Endothelial cell of umbilical vein (primary cell): ENCODE measurements at regions of chr14 and their contacts with region 1.

Region 1: DNA sequence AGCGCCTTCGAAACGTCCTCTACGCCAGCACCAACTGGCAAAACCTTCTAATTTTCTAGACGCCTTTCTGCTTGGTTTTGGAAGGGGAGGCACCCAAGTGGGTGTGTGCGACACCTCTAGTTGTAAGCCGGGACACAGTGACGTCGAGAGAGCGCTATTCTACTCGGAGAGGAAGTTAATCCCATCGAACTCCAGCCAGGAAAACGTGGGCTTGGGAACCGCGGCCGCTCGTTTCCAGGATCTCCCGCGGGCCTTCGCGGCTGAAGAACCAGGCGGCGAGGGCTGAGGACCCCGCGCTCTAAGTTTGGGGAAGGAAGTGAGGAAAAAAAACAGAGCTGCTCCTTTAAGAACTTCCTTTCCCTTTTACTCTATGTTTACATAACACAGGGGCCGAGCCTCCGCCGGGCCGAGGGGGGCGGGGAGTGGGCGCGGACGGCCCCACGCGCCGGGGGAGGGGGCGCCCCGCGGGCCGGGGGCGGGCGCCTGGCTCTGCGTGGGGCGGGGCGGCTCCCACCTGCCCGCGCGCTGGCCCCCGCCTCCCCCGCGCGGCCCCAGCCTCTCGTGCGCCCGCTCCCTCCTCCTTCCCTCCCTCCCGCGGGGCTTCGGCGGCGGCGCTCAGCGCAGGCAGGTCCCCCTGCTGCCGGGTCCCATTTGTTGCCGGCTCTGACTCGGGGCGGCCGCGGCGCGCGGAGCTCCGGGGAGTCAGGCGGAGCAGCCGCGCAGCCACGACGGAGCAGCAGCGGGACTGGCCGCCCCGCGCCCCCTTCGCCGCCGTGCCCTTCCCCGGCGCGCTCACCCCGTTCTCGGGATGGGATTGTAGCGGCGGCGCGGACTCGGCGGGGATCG is at the start of gene PELI2:
- DNase-seq: peak; percentile 64
- H3K4me3 ChIP-seq: peak within 1 kb of the TSS; percentile 77 to 92 (median 90)
- H3K27ac ChIP-seq: peak within 1 kb of the TSS; percentile 48
- H3K4me1 ChIP-seq: peaks cover 19% of the 10 kb centered on the region
- H3K27me3 ChIP-seq: peaks cover 0 to 3% of the 10 kb centered on the region in 2 experiments
- CTCF ChIP-seq: peak in 1 of 2 donors; percentile 27
- POLR2A ChIP-seq: peak; percentile 46
- total RNA-seq, gene PELI2: 13.0 TPM in 2 replicates

Region 2: DNA sequence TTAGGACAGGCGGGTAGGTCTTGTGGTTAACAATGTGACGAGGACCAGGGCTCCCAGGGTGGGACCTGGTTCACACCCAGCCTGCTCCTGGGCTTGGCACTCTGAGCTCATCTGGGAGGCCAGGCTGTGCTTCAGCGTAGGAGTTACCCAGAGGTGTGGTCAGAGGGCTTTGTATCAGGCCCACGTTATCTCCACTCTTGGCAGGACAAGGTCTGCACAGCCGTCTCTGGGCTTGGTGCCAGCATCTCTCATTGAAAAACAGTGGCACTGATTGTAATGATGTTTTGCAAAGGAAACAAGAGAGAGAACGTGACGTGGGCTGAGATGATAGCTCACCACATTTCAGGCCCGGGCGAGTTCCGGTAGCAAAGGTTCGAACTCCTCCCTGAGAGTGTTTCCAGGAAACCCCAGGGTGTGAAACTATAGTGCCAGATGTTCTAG is 310.9 kb before region 1 on chr14:
- CTCF ChIA-PET with region 1: no interaction called
- POLR2A ChIA-PET with region 1: no interaction called
- dilution Hi-C with region 1: no loop called
- intact Hi-C with region 1: loop called (anchors 5 kb)
- DNase-seq: peak; percentile 98
- H3K4me3 ChIP-seq: no peak overlapping the region
- H3K27ac ChIP-seq: peak overlapping the region; percentile 82
- H3K4me1 ChIP-seq: peaks cover 33% of the 10 kb centered on the region
- H3K27me3 ChIP-seq: no peaks in the 10 kb centered on the region
- CTCF ChIP-seq: no peak
- POLR2A ChIP-seq: no peak

Region 3: DNA sequence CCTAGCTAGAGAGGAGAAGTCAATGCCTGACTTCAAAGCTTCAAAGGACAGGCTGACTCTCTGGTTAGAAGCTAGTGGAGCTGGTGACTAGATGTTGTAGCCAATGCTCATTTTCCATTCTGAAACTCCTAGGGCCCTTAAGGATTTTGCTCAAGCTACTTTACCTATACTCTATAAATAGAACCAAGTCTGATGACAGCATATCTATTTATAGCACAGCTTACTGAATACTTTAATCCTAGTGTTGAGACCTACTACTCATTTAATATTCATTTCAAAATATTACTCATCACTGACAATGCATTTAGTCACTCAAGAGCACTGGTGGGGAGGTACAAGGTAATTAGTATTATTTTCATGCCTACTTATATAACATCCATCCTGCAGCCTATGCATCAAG is 137.0 kb before region 1 on chr14:
- CTCF ChIA-PET with region 1: no interaction called
- POLR2A ChIA-PET with region 1: no interaction called
- dilution Hi-C with region 1: no loop called
- intact Hi-C with region 1: no loop called
- DNase-seq: no peak
- H3K4me3 ChIP-seq: no peak overlapping the region
- H3K27ac ChIP-seq: no peak overlapping the region
- H3K4me1 ChIP-seq: no peaks in the 10 kb centered on the region
- H3K27me3 ChIP-seq: peaks cover 7 to 9% of the 10 kb centered on the region in 2 experiments
- CTCF ChIP-seq: no peak
- POLR2A ChIP-seq: no peak

Region 4: GRCh38 chr14:56195704-56196103 is 77.7 kb after region 1 on chr14:
- CTCF ChIA-PET with region 1: no interaction called
- POLR2A ChIA-PET with region 1: no interaction called
- dilution Hi-C with region 1: no loop called
- intact Hi-C with region 1: loop called (anchors 1 kb)
- DNase-seq: peak; percentile 31
- H3K4me3 ChIP-seq: no peak overlapping the region
- H3K27ac ChIP-seq: no peak overlapping the region
- H3K4me1 ChIP-seq: peaks cover 19% of the 10 kb centered on the region
- H3K27me3 ChIP-seq: no peaks in the 10 kb centered on the region
- CTCF ChIP-seq: no peak
- POLR2A ChIP-seq: no peak

Region 5: DNA sequence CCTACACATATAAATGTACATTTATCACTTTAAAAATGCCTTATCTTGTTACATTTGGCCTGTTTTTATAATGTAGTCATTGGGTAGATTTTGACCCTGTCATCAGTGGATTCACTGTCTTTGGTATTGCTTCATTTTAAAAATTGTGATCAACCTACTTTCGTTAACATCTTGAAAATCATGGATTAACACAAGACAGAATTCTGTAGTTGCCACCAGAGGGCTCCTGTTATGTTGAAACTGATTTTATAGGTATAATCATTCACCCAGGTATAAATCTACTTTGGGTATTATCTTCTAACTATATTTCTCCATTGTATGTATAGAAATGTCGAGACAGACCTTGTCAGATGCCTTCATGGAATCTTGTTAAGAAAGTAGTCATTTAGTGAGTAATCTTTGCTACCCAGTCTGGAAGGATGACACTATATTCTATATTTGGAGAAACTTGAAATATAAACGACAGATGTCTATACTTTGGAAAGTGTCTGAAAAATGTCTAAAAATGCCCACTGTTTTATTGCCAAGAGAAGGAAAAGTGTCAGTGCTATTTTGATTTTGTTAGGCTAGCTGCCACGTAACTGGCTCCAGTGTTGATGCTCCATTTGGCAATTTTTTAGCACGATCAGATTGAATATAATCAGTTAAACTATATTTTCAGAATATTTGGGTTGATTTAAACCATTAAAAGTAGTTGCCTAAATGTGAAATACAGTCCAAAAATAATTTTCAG is 129.6 kb after region 1 on chr14:
- CTCF ChIA-PET with region 1: no interaction called
- POLR2A ChIA-PET with region 1: no interaction called
- dilution Hi-C with region 1: no loop called
- intact Hi-C with region 1: loop called (anchors 1 kb)
- DNase-seq: peak; percentile 48
- H3K4me3 ChIP-seq: no peak overlapping the region
- H3K27ac ChIP-seq: no peak overlapping the region
- H3K4me1 ChIP-seq: no peaks in the 10 kb centered on the region
- H3K27me3 ChIP-seq: no peaks in the 10 kb centered on the region
- CTCF ChIP-seq: peak in 1 of 2 donors; percentile 7
- POLR2A ChIP-seq: no peak

Region 6: GRCh38 chr14:56333359-56334292 is 215.6 kb after region 1 on chr14:
- CTCF ChIA-PET with region 1: interaction called, 4 read pairs
- POLR2A ChIA-PET with region 1: no interaction called
- dilution Hi-C with region 1: no loop called
- intact Hi-C with region 1: loop called (anchors 1 kb)
- DNase-seq: peak; percentile 91
- H3K4me3 ChIP-seq: no peak overlapping the region
- H3K27ac ChIP-seq: peak overlapping the region; percentile 99
- H3K4me1 ChIP-seq: peaks cover 25% of the 10 kb centered on the region
- H3K27me3 ChIP-seq: no peaks in the 10 kb centered on the region
- CTCF ChIP-seq: no peak
- POLR2A ChIP-seq: peak; percentile 36

Region 7: GRCh38 chr14:56474419-56475022 is 356.5 kb after region 1 on chr14:
- CTCF ChIA-PET with region 1: interaction called, 9 read pairs
- POLR2A ChIA-PET with region 1: interaction called, 5 read pairs
- dilution Hi-C with region 1: no loop called
- intact Hi-C with region 1: loop called (anchors 2 kb)
- DNase-seq: peak; percentile 54
- H3K4me3 ChIP-seq: no peak overlapping the region
- H3K27ac ChIP-seq: no peak overlapping the region
- H3K4me1 ChIP-seq: no peaks in the 10 kb centered on the region
- H3K27me3 ChIP-seq: peaks cover 0 to 8% of the 10 kb centered on the region in 2 experiments
- CTCF ChIP-seq: peak; percentile 63 to 64
- POLR2A ChIP-seq: no peak